PC-3 (cell line): ENCODE measurements at regions of chr4 and their contacts with region 1.

Region 1: DNA sequence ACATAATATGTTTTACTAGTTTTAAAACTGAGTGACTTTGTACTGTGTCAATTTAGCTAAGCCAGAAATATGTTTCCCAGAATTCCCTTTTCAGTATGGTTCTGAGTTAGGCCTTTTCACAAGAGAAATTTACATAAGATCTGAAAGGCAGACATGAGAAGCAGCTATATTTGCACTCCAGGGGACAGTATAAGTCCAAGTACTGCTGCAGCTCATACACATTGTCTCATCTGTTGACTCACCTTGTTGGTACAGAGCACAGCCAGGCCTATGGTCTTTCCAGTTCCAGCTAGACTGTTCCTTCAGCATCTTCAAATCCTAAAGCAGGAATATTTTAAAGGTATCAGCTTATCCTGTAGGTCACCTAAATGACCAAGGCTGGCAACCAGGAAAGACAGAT is 53.5 kb downstream of the BMP3 start:
- DNase-seq: peak; percentile 65
- ATAC-seq: peak; percentile 96
- H3K4me3 ChIP-seq: no peak overlapping the region
- H3K27ac ChIP-seq: no peak overlapping the region
- H3K4me1 ChIP-seq: no peaks in the 10 kb centered on the region
- H3K27me3 ChIP-seq: no peaks in the 10 kb centered on the region
- CTCF ChIP-seq: peak; percentile 67

Region 2: GRCh38 chr4:79987401-79987800 is 1096.6 kb before region 1 on chr4:
- CTCF ChIA-PET with region 1: no interaction called
- POLR2A ChIA-PET with region 1: no interaction called
- intact Hi-C with region 1: no loop called
- DNase-seq: no peak
- ATAC-seq: no peak
- H3K4me3 ChIP-seq: no peak overlapping the region
- H3K27ac ChIP-seq: no peak overlapping the region
- H3K4me1 ChIP-seq: peaks cover 6% of the 10 kb centered on the region
- H3K27me3 ChIP-seq: no peaks in the 10 kb centered on the region
- CTCF ChIP-seq: no peak

Region 3: DNA sequence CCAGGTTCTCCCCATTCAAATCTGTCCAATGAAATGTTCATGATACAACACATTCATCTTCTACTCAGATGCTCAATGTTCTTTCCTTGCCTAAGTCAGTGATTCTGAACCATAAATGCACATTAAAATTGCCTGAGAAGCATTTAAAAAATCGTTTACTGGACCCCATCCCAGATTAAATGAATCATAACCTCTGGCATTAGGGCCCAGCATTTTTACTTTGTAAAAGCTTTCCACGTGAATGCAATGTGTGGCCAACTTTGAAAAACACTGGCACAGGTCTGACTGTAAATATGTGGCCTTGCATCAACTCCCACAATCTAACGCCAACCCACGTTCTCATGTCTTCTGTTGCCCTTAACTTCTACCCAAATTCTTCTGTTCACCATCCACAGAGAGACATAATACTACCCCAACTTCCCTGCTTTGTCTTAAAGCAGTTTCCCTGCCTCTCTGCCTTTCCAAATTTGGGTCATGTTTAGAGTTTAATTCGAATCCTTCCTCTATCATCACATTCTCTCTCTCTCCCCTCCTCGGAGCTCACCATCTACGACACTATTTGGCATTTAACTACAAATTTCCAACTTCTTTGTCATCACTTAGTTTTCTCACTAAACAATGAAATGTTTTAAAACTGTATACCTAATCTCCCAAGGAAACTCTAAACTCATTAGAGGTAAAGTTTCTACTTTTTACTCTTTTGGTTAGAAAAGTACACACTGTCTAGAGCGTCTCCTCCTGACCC is 52.3 kb after region 1 on chr4:
- CTCF ChIA-PET with region 1: no interaction called
- POLR2A ChIA-PET with region 1: no interaction called
- intact Hi-C with region 1: loop called (anchors 2 kb)
- DNase-seq: peak; percentile 70
- ATAC-seq: peak; percentile 87
- H3K4me3 ChIP-seq: 0 out of 2 replicates have a peak overlapping the region, but pooled peaks have one; percentile 16
- H3K27ac ChIP-seq: peak overlapping the region; percentile 94
- H3K4me1 ChIP-seq: peaks cover 24% of the 10 kb centered on the region
- H3K27me3 ChIP-seq: no peaks in the 10 kb centered on the region
- CTCF ChIP-seq: no peak

Region 4: DNA sequence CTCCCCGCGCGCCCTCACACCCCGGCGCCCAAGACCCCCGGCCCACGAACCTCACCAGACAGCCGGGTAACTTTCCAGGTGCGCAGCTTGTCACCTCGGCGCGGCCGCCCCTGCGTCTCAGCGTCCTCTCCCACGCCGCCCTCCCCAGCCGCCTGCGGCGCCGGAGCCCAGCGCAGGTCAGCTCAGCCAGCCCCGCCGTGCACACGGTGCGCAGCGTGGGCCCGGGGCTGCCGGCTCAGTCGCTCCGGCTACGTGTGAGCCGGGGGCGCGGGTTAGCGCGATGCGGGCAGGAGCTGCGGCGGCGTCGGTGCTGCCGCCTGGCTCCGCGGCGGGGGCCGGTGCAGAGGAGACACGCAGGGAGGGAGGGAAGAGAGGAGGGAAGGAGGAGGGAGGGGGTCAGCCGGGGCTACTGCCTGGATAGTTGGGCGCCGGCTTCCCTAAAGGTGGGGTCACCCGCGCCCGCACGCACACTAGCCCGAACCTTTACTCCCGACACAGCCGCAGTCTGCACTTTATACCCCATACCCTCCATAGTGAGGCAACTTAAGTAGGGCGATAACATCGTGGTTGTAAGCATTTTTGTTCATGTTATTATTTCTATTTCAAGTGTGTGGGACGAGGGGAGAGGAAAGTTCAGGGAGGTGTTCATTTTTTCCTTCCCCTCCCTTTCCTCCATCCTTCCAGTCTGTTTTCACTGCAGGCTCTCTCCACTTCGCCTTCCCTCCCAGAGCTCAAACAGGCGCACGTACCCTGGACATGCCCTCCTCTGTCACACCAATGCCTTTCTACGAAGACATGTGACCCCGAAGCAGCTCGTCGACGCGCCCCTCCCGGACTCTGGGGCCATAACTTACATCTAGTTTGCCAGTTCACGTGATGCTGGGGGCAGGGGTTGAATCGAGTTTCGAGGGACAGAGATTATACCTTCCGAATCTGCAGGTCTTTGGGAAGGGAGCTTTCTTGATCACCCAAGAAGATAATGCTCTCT is 131.1 kb after region 1 on chr4 and contains the start of gene PRKG2:
- CTCF ChIA-PET with region 1: no interaction called
- POLR2A ChIA-PET with region 1: no interaction called
- intact Hi-C with region 1: loop called (anchors 5 kb)
- DNase-seq: no peak
- ATAC-seq: peak; percentile 67
- H3K4me3 ChIP-seq: peak within 1 kb of the TSS; percentile 62
- H3K27ac ChIP-seq: no peak within 1 kb of the TSS
- H3K4me1 ChIP-seq: no peaks in the 10 kb centered on the region
- H3K27me3 ChIP-seq: peaks cover 32% of the 10 kb centered on the region
- CTCF ChIP-seq: no peak
- total RNA-seq, gene PRKG2: 0.40 and 0.55 TPM in 2 replicates

Region 5: DNA sequence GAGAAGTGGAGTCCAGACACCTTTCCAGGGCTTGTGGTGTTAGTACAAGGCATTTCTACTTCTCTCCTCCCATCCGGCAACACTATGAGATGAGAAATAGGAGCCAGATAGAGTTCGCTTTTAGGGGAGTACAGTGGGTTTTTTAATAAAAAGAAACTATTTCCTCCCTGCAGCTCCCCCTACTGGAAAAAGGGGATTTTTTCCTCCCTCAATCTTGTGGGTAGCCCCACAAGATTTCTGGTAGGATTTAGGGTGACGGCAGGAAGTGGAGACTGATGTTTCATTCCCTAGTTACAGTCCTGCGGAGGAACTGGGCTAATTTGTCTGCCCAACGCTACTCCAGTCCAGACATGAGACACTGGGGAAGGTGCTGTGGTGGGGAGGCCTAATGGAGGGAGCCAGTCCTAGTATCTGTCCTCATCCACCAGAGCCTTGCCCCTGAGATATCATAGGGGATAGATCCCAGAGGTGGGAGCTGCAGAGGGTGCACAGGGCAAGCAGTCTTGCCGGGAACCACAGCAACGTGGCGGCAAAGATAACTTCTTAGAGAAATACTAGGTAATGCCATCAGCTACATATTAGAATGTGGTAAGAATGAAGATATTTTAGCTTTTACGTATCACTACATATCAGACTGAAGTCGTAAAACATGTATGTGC is 176.5 kb after region 1 on chr4:
- CTCF ChIA-PET with region 1: no interaction called
- POLR2A ChIA-PET with region 1: no interaction called
- intact Hi-C with region 1: loop called (anchors 5 kb)
- DNase-seq: peak; percentile 32
- ATAC-seq: no peak
- H3K4me3 ChIP-seq: no peak overlapping the region
- H3K27ac ChIP-seq: no peak overlapping the region
- H3K4me1 ChIP-seq: peaks cover 10% of the 10 kb centered on the region; the same call in 1 of the 2 replicates
- H3K27me3 ChIP-seq: no peaks in the 10 kb centered on the region
- CTCF ChIP-seq: peak; percentile 66

Region 6: DNA sequence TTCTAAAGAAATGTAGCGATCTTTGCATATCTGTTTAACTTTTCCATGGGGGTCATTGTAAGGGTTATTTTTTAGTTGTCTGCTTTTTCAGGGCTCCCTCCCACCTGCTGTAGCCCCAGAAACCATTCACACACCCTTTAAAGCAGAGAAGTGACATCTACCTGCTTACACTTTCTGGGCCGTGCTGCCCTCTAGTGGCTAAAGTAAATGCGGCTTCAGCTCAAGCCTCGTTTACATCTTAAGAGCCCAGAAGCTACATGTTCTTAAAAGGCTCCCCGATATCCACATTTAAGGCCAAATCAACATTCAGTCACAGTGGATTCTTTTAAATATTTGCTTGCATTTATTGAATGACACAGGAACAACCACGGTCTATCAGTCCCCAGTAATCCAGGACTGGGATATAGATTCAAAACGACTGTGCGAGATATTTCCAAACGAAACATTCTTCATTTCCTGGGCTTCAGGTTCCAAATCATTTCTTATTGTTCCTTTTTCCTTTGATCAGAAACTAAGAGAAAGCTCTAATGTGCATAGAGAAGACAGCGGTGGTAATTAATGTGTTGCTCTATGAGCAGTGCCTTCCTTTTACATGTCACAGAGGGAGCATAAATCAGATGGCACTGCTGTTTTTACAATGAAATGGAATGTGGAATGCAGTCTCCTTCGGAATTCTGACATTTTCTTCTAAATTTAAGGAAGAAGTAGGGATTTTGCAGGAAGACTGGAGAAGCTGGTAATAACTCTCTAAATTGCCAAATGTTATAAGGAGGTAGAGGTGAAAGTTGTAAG is 267.8 kb after region 1 on chr4:
- CTCF ChIA-PET with region 1: interaction called, 7 read pairs
- POLR2A ChIA-PET with region 1: no interaction called
- intact Hi-C with region 1: loop called (anchors 1 kb)
- DNase-seq: peak; percentile 75
- ATAC-seq: peak; percentile 83
- H3K4me3 ChIP-seq: no peak overlapping the region
- H3K27ac ChIP-seq: no peak overlapping the region
- H3K4me1 ChIP-seq: no peaks in the 10 kb centered on the region
- H3K27me3 ChIP-seq: no peaks in the 10 kb centered on the region
- CTCF ChIP-seq: peak; percentile 90

Region 7: DNA sequence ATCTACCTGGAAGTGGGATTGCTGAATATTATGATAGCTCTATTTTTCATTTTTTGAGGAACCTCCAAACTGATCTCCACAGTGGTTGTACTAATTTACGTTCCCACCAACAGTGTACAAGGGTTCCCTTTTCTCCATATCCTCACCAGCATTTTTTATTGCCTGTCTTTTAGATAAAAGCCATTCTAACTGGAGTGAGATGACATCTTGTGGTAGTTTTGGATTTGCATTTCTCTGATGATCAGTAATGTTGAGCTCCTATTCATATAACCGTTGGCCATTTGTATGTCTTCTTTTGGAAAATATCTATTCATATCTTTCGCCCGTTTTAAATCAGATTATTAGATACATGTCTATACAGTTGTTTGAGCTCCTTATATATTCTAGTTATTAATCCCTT is 285.9 kb after region 1 on chr4:
- CTCF ChIA-PET with region 1: no interaction called
- POLR2A ChIA-PET with region 1: no interaction called
- intact Hi-C with region 1: loop called (anchors 5 kb)
- DNase-seq: peak; percentile 5
- ATAC-seq: 0 out of 2 replicates have a peak, but pooled peaks have one; percentile 29
- H3K4me3 ChIP-seq: no peak overlapping the region
- H3K27ac ChIP-seq: no peak overlapping the region
- H3K4me1 ChIP-seq: no peaks in the 10 kb centered on the region
- H3K27me3 ChIP-seq: no peaks in the 10 kb centered on the region
- CTCF ChIP-seq: peak; percentile 24; the same call in 1 of the 2 replicates